B cell (primary cell): ENCODE measurements at regions of chr1 and their contacts with region 1.

Region 1: DNA sequence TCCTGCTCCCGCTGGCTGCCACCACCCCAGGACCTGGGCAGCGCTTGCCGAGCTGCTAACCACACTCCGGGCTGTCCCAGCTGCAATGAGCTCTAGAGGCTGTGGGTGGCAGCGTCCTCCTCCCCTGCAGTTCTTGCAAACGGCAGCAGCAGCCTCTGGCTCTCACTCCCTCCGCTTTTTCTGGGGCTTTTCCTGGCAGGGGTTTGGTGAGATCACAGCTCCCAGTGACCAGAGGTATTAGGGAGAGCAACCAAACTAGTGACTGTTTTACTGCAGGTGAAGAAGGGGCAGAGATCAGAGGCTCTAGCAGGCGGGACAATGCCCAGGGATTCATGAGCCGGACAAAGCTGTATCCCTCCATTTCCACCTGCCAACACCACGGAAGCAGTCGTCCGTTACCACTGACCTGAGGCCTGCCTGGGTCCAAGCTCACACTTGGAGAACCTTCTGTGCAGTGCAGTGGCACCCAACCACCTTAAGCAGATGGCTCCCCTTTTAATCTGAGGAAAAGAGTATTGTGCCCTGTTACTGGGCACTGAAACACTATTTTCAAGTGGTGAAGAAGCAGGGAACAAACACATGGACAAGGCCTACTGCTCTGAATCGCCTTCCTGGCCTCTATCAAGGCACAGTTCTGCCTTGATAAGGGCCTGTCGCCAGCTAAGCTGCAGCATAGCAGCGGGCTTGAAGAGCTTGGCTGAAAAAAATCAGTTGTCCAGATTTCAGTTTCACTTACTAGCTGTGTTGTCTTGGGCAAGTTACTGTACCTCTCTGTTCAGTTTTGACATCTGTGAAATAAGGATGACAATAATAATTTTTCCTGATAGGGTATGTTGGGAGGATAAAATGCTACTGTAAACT is at the start of gene F5:
- DNase-seq: peak; percentile 75
- ATAC-seq: peak; percentile 93
- H3K4me3 ChIP-seq: peak within 1 kb of the TSS in 3 of 5 experiments; percentile 8 to 22 (median 13)
- H3K4me3 Mint-ChIP-seq: peak within 1 kb of the TSS; percentile 69
- H3K27ac ChIP-seq: no peak within 1 kb of the TSS
- H3K27ac Mint-ChIP-seq: no peak within 1 kb of the TSS
- H3K4me1 ChIP-seq: peaks cover 7 to 9% of the 10 kb centered on the region in 2 donors
- H3K4me1 Mint-ChIP-seq: peaks cover 7% of the 10 kb centered on the region
- H3K27me3 ChIP-seq: peaks cover 0 to 13% (median 9%) of the 10 kb centered on the region in 4 experiments
- H3K27me3 Mint-ChIP-seq: peaks cover 26% of the 10 kb centered on the region
- CTCF ChIP-seq: peak; percentile 73
- total RNA-seq, gene F5: 0.15 and 0.27 TPM in 2 replicates

Region 2: DNA sequence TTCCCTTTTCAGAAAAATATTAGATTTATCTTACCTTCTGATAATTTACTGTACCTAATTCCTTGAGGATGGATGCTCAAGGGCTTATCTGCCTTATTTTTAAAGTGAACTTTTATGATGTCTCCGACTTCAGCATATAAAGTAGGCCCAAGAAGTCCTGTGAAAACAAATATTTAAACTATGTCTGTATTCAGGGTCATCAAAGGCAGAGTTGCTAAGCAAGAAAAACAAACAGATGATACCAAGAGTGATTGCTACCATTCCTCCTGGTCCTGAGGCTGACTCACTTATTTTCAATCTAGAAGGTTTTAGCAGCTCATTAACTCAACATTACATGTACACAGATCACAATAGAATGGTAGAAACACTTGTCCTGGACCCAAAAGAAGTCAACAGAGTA is 14.4 kb before region 1 on chr1:
- CTCF ChIA-PET with region 1: no interaction called
- POLR2A ChIA-PET with region 1: no interaction called
- intact Hi-C with region 1: no loop called
- DNase-seq: no peak
- ATAC-seq: no peak
- H3K4me3 ChIP-seq: no peak overlapping the region
- H3K4me3 Mint-ChIP-seq: no peak overlapping the region
- H3K27ac ChIP-seq: no peak overlapping the region
- H3K27ac Mint-ChIP-seq: no peak overlapping the region
- H3K4me1 ChIP-seq: no peaks in the 10 kb centered on the region
- H3K4me1 Mint-ChIP-seq: no peaks in the 10 kb centered on the region
- H3K27me3 ChIP-seq: peaks cover 0 to 4% (median 4%) of the 10 kb centered on the region in 4 experiments
- H3K27me3 Mint-ChIP-seq: peaks cover 10% of the 10 kb centered on the region
- CTCF ChIP-seq: no peak

Region 3: DNA sequence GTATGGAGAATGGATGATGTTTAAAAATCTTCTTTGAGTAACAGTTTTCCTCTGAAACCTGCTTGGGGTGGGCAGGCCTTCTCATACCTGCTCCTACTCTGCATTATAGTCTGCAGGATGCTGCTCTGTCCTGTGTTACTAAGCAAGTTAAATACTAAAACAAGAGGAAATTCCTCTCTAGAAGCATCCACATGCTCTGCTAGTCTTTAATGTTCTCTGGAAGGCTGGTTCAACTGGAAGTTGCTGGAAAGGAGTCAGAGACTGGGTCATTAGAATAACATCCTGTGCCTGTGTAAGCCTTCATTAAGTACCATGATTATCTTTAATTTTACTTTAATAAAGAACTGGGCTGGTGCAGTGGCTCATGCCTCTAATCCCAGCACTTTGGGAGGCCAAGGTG is 37.5 kb after region 1 on chr1:
- CTCF ChIA-PET with region 1: no interaction called
- POLR2A ChIA-PET with region 1: no interaction called
- intact Hi-C with region 1: no loop called
- DNase-seq: no peak
- ATAC-seq: no peak
- H3K4me3 ChIP-seq: no peak overlapping the region
- H3K4me3 Mint-ChIP-seq: no peak overlapping the region
- H3K27ac ChIP-seq: no peak overlapping the region
- H3K27ac Mint-ChIP-seq: no peak overlapping the region
- H3K4me1 ChIP-seq: no peaks in the 10 kb centered on the region
- H3K4me1 Mint-ChIP-seq: peaks cover 7% of the 10 kb centered on the region
- H3K27me3 ChIP-seq: no peaks in the 10 kb centered on the region
- H3K27me3 Mint-ChIP-seq: no peaks in the 10 kb centered on the region
- CTCF ChIP-seq: no peak

Region 4: DNA sequence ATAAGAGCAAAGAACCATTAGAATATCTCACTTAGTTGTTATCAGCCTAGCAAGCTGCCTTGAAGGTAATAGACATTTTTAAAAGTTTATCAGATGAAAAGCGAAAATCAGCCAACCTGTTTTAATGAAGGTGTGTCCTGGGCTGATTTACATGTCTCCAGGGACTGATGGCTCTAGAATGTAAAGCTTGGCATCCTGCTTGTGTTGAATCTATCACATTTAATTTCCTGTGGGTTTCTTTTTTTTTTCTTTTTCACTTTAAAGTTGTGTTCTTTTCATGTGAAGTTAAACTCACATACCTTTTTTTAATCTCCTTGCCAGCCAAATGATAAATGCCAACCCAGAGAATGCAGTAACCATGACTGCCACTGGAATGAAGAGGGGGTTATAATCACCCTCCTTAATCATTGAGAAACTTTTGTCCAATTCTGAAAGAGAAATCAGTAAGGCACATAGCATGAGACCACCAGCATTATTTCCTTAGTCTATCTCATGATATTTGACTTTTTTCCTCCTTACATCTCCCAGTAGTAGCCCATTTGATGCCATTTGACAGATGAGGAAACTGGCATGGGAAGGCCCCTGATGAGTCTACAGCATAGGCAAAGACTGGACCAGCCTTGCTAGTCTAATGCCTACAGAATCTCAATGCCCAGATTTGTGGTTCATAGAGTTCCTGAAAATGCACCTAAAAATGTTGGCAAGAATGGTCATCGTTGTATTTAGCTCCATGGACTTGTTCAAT is 114.8 kb after region 1 on chr1:
- CTCF ChIA-PET with region 1: interaction called, 10 read pairs
- POLR2A ChIA-PET with region 1: no interaction called
- intact Hi-C with region 1: no loop called
- DNase-seq: peak; percentile 45
- ATAC-seq: peak; percentile 44
- H3K4me3 ChIP-seq: peak overlapping the region; percentile 0 to 16 (median 1)
- H3K4me3 Mint-ChIP-seq: peak overlapping the region; percentile 76
- H3K27ac ChIP-seq: peak overlapping the region; percentile 56 to 87
- H3K27ac Mint-ChIP-seq: peak overlapping the region; percentile 94
- H3K4me1 ChIP-seq: peaks cover 98 to 100% of the 10 kb centered on the region in 2 donors
- H3K4me1 Mint-ChIP-seq: peaks cover 95% of the 10 kb centered on the region
- H3K27me3 ChIP-seq: no peaks in the 10 kb centered on the region
- H3K27me3 Mint-ChIP-seq: no peaks in the 10 kb centered on the region
- CTCF ChIP-seq: no peak

Region 5: DNA sequence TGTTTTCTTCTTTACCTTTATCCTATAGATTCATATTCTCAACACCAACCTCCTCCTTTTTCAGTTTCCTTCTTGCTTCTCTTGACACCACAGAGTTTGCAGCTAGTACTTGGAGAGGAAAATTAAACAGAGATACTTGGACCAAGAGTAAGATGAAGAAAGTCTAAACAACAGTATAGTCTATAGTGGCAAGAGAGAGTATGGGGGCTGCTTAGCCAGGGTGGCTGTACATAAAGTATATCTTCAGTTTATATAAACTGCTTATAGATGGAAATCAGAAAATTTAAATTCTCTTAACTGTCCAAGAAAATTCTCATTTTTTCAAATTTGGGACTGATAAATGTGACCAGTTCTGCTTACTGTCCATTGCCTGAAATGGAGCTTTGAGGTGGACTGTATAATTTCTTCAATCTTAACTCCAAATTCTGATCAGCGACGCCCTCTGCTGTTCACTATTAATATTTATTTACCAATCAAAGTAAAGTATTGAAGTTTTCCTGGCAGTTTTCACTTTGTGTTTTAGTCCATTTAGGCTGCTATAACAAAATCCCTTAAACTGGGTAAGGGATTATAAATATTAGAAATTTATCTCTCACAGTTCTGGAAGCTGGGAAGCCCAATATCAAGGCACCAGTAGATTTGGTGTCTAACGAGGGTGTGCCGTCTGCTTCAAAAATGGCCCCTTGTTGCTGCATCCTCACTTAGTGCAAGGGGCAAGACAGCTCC is 222.9 kb after region 1 on chr1:
- CTCF ChIA-PET with region 1: interaction called, 32 read pairs
- POLR2A ChIA-PET with region 1: no interaction called
- intact Hi-C with region 1: loop called (anchors 1 kb)
- DNase-seq: peak; percentile 62
- ATAC-seq: no peak
- H3K4me3 ChIP-seq: no peak overlapping the region
- H3K4me3 Mint-ChIP-seq: no peak overlapping the region
- H3K27ac ChIP-seq: no peak overlapping the region
- H3K27ac Mint-ChIP-seq: no peak overlapping the region
- H3K4me1 ChIP-seq: no peaks in the 10 kb centered on the region
- H3K4me1 Mint-ChIP-seq: no peaks in the 10 kb centered on the region
- H3K27me3 ChIP-seq: no peaks in the 10 kb centered on the region
- H3K27me3 Mint-ChIP-seq: no peaks in the 10 kb centered on the region
- CTCF ChIP-seq: peak; percentile 81